AG04450 (cell line): ENCODE measurements at regions of chr20 and their contacts with region 1.

Region 1: DNA sequence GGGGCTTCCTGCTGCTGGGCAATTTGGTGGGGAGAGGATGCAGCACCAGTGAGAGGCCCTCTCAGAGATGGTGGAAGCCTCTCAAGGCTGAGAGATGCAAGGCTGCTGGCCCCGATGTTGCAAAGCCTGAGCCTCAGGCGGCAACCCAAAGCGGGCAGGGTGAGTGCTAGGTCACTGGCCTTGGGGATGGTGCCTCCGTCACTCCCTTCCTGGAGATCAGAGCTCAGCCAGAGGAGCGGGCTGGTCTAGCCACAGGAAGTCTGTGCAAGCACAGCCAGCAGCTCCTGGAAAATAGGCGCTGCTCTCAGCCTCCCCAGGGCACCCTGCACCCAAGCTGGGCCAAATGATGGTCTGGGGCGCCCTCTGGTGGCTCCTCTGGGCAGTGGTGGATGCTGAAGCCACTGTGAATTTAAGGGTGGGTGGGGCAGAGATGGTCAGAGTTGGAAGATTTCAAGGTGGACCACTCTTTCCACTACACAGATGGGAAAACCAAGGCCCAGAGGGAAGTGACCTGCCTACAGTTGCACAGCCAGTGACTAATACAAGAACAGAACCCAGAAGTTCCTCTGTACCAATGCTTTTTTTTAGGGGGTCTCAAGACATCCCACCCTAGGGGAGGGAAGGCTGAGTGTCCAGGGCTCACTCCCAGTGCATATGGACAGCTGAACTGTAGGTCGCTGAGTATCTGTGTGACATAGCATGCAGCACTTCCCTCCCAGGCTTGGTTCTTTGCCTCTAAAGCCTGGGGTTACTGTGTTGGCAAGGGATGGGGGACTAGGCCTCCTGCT is 20.8 kb downstream of the C20orf203 start:
- DNase-seq: peak; percentile 42
- H3K4me3 ChIP-seq: no peak overlapping the region
- H3K27ac ChIP-seq: no peak overlapping the region
- H3K27me3 ChIP-seq: no peaks in the 10 kb centered on the region
- CTCF ChIP-seq: peak; percentile 94

Region 2: GRCh38 chr20:32336918-32337347 is 316.0 kb before region 1 on chr20:
- CTCF ChIA-PET with region 1: interaction called, 13 read pairs
- POLR2A ChIA-PET with region 1: no interaction called
- DNase-seq: no peak
- H3K4me3 ChIP-seq: no peak overlapping the region
- H3K27ac ChIP-seq: no peak overlapping the region
- H3K27me3 ChIP-seq: no peaks in the 10 kb centered on the region
- CTCF ChIP-seq: peak; percentile 76

Region 3: DNA sequence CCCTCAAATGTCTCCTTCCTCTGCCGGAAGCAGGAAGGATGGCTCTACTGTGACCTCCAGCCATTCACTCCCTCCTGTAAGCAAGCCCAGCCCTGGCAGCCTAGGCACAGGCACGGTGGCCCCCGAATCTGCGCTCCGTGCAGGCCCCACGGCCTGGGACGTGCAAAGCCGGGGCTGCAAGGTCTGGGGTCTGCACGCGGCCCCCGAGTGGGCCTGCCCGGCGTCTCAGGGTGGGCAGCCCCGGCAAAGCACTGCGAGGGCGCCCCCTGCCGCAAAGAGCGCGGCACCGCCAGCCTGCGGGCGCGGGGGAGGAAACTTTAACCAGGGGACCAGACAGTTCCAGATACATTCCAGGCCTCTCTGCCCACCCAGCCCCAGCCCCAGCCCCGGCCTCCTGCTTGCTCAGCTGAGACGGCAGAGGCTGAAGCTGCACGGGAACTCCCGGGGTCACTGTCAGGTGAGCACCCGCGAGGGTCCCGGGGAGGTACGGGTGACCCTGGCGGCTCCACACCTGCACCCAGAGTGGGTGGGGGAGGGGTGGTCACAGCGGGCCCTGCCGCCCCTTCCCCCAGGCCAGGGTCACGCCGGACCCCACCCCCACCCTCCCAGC is 196.0 kb before region 1 on chr20:
- CTCF ChIA-PET with region 1: interaction called, 11 read pairs
- POLR2A ChIA-PET with region 1: no interaction called
- DNase-seq: no peak
- H3K4me3 ChIP-seq: peak overlapping the region; percentile 57
- H3K27ac ChIP-seq: no peak overlapping the region
- H3K27me3 ChIP-seq: no peaks in the 10 kb centered on the region
- CTCF ChIP-seq: peak; percentile 69

Region 4: GRCh38 chr20:32484958-32485769 is 167.8 kb before region 1 on chr20:
- CTCF ChIA-PET with region 1: interaction called, 14 read pairs
- POLR2A ChIA-PET with region 1: no interaction called
- DNase-seq: no peak
- H3K4me3 ChIP-seq: peak overlapping the region; percentile 69
- H3K27ac ChIP-seq: peak overlapping the region; percentile 61
- H3K27me3 ChIP-seq: peaks cover 2% of the 10 kb centered on the region
- CTCF ChIP-seq: peak; percentile 89

Region 5: DNA sequence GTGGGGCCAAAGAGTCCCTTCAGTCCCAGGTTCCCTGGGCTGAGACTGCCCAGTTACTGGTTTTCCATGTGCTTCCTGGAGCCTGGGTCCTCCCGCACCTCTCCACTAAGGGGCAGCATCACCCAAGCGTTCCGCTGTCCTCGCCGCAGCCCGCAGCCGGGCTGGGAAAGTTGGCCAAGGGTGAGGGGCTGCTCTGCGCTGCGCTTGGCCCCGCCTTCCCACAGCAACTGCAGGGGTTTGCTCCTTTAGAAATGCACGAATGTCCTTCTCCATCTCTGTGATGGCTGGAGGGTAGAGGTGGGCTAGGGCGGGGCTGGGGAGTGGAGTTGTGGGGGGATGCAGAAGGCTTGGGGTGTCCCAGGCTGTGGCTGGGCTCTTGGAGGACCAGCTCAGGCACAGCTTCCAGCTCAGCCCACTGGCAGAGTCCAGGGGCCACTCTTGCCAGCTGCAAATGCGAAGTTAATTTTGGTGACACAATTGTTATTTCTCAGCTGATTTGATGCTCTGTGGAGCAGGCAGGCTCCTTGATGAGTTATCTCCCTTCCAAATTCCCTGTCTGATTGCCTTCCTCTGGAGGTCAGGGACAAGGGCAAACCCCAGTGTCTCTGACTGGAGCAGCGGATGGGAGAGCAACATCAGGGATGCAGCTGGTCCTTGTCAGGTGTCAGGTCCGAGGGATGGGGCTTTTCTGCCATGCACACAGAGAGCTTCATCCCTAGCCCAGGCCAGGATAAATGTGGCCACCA is 131.0 kb before region 1 on chr20:
- CTCF ChIA-PET with region 1: interaction called, 242 read pairs
- POLR2A ChIA-PET with region 1: interaction called, 6 read pairs
- DNase-seq: no peak
- H3K4me3 ChIP-seq: no peak overlapping the region
- H3K27ac ChIP-seq: no peak overlapping the region
- H3K27me3 ChIP-seq: no peaks in the 10 kb centered on the region
- CTCF ChIP-seq: peak; percentile 88

Region 6: GRCh38 chr20:32528171-32528891 is 124.6 kb before region 1 on chr20:
- CTCF ChIA-PET with region 1: interaction called, 242 read pairs
- POLR2A ChIA-PET with region 1: interaction called, 6 read pairs
- DNase-seq: no peak
- H3K4me3 ChIP-seq: no peak overlapping the region
- H3K27ac ChIP-seq: no peak overlapping the region
- H3K27me3 ChIP-seq: peaks cover 21% of the 10 kb centered on the region
- CTCF ChIP-seq: no peak